ENCODE measurements at regions of chr5 and their contacts with region 1.

Region 1: GRCh38 chr5:124748687-124749594 is 2.5 kb upstream of the ZNF608 start:
- DNase-seq: peak; percentile 35 to 83 (median 72)
- ATAC-seq: peak; percentile 82 to 88 (median 84)
- H3K4me3 ChIP-seq: peak overlapping the region; percentile 22 to 55 (median 36)
- H3K27ac ChIP-seq: peak overlapping the region; percentile 65 to 97 (median 84)
- H3K4me1 ChIP-seq: peaks cover 0 to 15% (median 9%) of the 10 kb centered on the region in 3 donors
- H3K27me3 ChIP-seq: no peaks in the 10 kb centered on the region
- CTCF ChIP-seq: no peak

Region 2: GRCh38 chr5:124888050-124888506 is 139.1 kb after region 1 on chr5:
- intact Hi-C with region 1: loop called in 1 of 3 experiments (anchors 10 kb)
- DNase-seq: peak in 4 of 6 donors; percentile 30 to 54 (median 43)
- ATAC-seq: peak; percentile 85 to 94 (median 92)
- H3K4me3 ChIP-seq: peak overlapping the region in 2 of 4 donors; percentile 8 to 30
- H3K27ac ChIP-seq: peak overlapping the region; percentile 82 to 93 (median 90)
- H3K4me1 ChIP-seq: peaks cover 35 to 49% (median 37%) of the 10 kb centered on the region in 3 donors
- H3K27me3 ChIP-seq: no peaks in the 10 kb centered on the region
- CTCF ChIP-seq: peak in 1 of 4 donors; percentile 10